Vagina (tissue), 2 donors: ENCODE measurements at regions of chr2 and their contacts with region 1.

Region 1: DNA sequence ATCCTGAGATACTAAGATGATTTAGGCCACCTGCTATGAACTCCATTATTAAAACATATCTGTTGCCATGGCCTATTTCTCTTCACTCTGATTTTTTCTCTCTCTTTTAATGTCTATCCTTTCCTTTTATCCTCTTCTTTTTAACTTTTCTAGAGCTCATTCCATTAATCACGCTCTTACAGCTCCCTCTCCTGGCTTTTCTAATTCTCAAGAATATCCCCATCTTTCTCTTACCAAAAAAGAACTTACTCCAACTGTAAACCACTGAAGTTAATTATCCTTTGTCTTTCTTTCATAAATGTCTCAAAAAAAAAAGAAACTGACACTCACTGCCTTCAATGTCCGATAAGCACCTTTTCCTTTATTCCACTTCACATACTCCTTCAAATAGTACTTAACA is 7.9 kb downstream of the PPP3R1 start:
- DNase-seq: no peak
- H3K4me3 ChIP-seq: no peak overlapping the region
- H3K27ac ChIP-seq: no peak overlapping the region
- H3K4me1 ChIP-seq: peaks cover 93% of the 10 kb centered on the region
- H3K27me3 ChIP-seq: no peaks in the 10 kb centered on the region
- CTCF ChIP-seq: no peak
- POLR2A ChIP-seq: no peak

Region 2: GRCh38 chr2:68196120-68196716 is 48.2 kb before region 1 on chr2:
- intact Hi-C with region 1: loop called (anchors 10 kb)
- DNase-seq: no peak
- H3K4me3 ChIP-seq: no peak overlapping the region
- H3K27ac ChIP-seq: no peak overlapping the region
- H3K4me1 ChIP-seq: peaks cover 54% of the 10 kb centered on the region
- H3K27me3 ChIP-seq: no peaks in the 10 kb centered on the region
- CTCF ChIP-seq: peak in 2 of 3 experiments; percentile 56 to 58
- POLR2A ChIP-seq: no peak